Activated naive CD4-positive, alpha-beta T cell treated with anti-CD3 and anti-CD28 coated beads for 36 hours (primary cell): ENCODE measurements at regions of chr14 and their contacts with region 1.

Region 1: GRCh38 chr14:67426983-67427606 is 15.1 kb upstream of the PLEK2 start:
- DNase-seq: peak; percentile 84
- H3K4me3 Mint-ChIP-seq: no peak overlapping the region
- H3K27ac Mint-ChIP-seq: no peak overlapping the region
- H3K4me1 Mint-ChIP-seq: no peaks in the 10 kb centered on the region
- H3K27me3 Mint-ChIP-seq: peaks cover 11% of the 10 kb centered on the region

Region 2: DNA sequence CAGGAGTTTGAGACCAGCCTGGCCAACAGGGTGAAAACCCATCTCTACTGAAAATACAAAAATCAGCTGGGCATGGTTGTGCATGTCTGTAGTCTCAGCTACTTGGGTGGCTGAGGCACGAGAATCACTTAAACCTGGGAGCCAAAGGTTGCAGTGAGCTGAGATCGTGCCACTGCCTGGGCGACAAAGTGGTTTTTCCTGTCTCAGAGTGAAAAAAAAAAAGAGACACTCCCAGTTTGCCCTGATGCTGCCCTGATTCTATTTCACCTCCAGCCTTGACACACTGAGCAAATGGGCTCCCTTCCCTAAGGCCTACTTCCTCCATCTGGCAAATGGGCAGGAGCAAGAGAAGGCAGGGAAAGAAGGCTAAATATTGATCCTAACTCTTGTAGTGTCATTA is 13.4 kb after region 1 on chr14:
- CTCF ChIA-PET with region 1: interaction called, 19 read pairs
- intact Hi-C with region 1: no loop called
- DNase-seq: no peak
- H3K4me3 Mint-ChIP-seq: no peak overlapping the region
- H3K27ac Mint-ChIP-seq: no peak overlapping the region
- H3K4me1 Mint-ChIP-seq: no peaks in the 10 kb centered on the region
- H3K27me3 Mint-ChIP-seq: peaks cover 10% of the 10 kb centered on the region

Region 3: DNA sequence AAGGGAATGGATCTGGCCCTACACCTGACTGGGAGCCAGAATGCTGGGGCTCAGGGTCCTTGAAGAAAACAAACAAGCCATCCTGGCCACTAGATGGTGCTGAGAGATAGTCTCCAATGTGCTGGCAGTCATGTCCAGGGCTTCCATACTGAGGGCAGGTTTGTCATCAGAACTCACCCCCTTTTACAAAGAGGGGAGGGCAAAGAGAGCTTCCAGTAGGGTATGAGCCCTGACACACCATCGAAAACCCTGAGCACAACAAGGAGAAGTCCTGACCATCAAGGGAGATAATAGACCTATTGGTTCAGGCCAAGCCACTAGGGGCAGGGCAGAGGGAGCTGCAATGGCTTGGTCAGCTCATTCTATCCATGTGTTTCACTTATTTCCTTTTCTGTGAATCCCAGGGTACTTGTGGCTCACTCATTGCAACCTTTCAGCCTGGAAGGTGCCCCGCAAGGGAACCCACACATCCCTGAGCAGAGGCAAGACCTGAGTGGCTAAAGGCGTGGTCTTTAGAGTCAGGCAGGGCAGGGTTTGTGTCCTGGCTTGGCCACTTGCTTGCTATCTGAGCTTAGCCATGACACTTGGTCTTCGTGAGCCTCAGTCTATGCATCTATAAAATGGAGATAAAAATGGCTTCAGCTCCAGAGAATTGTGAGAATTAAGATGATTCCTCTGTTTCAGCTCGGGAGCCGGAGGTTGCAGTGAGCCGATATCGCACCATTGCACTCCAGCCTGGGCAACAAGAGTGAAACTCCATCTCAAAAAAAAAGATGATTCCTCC is 99.8 kb after region 1 on chr14:
- CTCF ChIA-PET with region 1: interaction called, 23 read pairs
- intact Hi-C with region 1: loop called (anchors 1 kb)
- DNase-seq: peak; percentile 67
- H3K4me3 Mint-ChIP-seq: no peak overlapping the region
- H3K27ac Mint-ChIP-seq: no peak overlapping the region
- H3K4me1 Mint-ChIP-seq: no peaks in the 10 kb centered on the region
- H3K27me3 Mint-ChIP-seq: peaks cover 14% of the 10 kb centered on the region

Region 4: GRCh38 chr14:67571272-67571850 is 144.3 kb after region 1 on chr14:
- CTCF ChIA-PET with region 1: interaction called, 191 read pairs
- intact Hi-C with region 1: loop called (anchors 1 kb)
- DNase-seq: peak; percentile 84
- H3K4me3 Mint-ChIP-seq: no peak overlapping the region
- H3K27ac Mint-ChIP-seq: no peak overlapping the region
- H3K4me1 Mint-ChIP-seq: no peaks in the 10 kb centered on the region
- H3K27me3 Mint-ChIP-seq: no peaks in the 10 kb centered on the region

Region 5: GRCh38 chr14:67666750-67667449 is 239.8 kb after region 1 on chr14:
- CTCF ChIA-PET with region 1: interaction called, 5 read pairs
- intact Hi-C with region 1: loop called (anchors 1 kb)
- DNase-seq: peak; percentile 55
- H3K4me3 Mint-ChIP-seq: no peak overlapping the region
- H3K27ac Mint-ChIP-seq: no peak overlapping the region
- H3K4me1 Mint-ChIP-seq: peaks cover 50% of the 10 kb centered on the region
- H3K27me3 Mint-ChIP-seq: no peaks in the 10 kb centered on the region

Region 6: GRCh38 chr14:68084256-68084655 is 657.2 kb after region 1 on chr14:
- CTCF ChIA-PET with region 1: no interaction called
- intact Hi-C with region 1: no loop called
- DNase-seq: no peak
- H3K4me3 Mint-ChIP-seq: no peak overlapping the region
- H3K27ac Mint-ChIP-seq: no peak overlapping the region
- H3K4me1 Mint-ChIP-seq: peaks cover 14% of the 10 kb centered on the region
- H3K27me3 Mint-ChIP-seq: no peaks in the 10 kb centered on the region